Right ventricle myocardium inferior (tissue), 1 donor: ENCODE measurements at regions of chr4 and their contacts with region 1.

Region 1: DNA sequence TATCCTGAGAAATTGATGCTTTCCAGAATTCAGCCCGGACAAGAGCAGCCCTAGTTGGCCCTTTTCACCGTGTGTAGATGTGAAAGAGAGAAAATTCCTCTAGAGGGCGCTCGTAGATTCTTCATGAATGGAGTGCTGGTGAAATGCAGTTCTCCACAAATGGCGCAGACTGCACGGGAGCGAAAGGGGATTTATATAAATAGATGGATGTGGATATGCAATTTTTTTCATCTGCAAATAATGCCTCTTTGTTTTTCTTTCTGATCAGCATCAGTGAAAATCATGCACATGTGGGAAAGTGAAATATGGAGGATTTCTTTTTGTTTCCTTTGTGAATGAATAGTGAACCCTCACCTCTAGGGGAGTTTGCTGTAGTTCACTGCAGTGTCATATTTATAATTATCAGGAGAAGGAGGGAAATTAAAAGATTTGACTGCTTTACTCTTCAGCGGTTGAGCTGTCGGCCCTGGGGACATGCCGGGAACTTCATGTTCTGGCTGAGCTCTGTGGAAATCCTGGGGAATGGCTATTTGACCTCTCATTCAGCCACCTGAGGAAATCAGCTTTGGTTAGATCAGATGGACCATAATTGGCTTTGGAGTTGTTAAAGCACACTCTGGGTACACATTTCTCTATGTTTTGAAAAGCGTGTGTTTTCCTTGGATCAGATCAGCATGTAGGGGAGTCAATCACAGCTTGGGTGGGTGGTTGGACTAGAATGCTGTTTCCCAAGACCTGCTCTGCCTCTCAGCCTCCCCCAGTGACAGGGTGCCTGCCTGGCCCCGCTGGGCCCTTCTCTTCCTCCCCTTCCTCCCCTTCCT is 115.0 kb upstream of the SHISA3 start:
- DNase-seq: no peak
- ATAC-seq: peak; percentile 87

Region 2: GRCh38 chr4:41957634-41958033 is 324.7 kb before region 1 on chr4:
- intact Hi-C with region 1: loop called (anchors 5 kb)
- DNase-seq: no peak
- ATAC-seq: no peak

Region 3: DNA sequence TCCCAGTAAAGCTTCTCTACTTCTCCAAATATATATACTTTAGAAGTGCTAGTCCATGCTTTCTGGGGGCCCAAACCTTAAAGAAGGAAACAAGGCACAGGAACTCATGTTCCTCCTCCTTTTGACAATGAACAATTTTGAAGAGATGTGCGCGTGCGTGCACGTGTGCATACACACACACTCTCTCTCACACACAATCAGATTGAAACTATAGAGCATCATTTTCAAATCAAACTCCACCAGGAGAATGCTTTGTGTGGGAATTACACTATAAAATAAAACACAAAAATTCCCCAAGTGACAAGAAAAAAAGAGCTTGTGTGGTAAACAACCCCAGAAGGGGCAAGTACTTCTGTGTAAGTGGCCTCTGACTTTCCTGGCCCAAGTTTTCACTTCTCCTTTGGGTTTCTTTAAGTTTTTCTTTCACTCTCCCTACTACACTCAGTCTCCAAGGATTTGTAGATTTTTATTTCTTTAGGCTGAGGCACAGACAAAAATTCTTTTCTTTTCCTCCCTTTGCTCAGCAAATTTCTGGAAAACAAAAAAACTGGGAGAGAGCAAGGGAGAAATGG is 68.4 kb after region 1 on chr4:
- intact Hi-C with region 1: no loop called
- DNase-seq: no peak
- ATAC-seq: no peak

Region 4: GRCh38 chr4:42396752-42397634 is 114.7 kb after region 1 on chr4 and contains the start of gene SHISA3:
- intact Hi-C with region 1: loop called (anchors 10 kb)
- DNase-seq: peak; percentile 74
- ATAC-seq: peak; percentile 71
- total RNA-seq, gene SHISA3: 5.5 TPM

Region 5: DNA sequence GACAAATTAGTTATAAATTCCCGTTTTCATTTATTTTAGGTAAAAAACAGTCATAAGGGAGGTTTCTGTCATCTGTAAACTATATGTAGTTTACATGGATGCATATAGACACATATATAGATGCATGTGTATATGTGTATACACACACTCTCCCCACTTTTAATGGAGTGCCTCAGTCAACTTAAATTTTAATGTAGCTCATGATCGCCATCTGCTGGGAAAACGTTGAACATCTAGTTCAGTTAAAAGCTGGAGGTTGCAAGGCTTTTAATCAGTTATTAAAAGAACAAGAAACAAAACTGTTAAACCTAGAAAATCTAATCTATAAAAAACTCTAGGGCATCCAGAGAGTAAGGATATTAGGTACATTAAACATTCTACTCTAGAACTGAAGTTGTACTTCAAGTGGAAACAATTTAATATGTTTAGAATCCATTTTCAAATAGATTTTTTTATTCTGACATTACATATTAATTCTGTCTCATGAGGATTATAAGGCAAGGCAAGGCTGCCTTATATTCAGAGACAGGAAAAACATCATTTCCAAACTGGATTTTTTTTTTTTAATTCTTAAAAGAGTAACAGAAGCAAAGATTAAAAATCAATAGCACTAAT is 237.6 kb after region 1 on chr4:
- intact Hi-C with region 1: loop called (anchors 1 kb)
- DNase-seq: no peak
- ATAC-seq: no peak

Region 6: DNA sequence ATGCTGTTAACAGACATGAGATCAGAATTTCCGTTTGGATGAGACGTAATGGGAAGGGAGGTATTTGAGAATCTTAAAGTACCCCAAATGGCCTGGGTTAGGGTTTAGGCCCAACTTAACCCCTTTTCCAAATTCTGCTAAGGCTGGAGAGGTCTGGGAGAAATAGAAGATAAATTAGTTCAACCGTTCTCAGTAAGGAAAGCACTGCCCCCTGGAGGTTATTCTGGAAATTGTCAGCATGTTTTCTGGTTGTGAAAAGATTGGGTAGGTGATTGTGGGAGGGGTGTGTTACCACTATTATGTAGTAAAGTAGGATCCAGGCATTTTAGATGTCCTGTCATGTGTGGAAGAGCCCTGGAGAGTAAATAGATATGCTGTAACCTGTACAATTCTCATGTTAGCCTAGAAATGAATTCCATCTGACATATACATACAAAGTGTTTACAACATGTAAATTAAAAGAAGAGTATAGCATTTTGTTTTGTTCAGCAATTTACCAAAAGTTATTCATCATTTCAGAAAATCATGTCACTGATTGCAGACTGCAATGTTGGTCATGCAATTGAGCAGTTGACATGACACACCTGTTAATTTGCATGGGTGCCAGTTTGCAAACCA is 583.4 kb after region 1 on chr4:
- intact Hi-C with region 1: loop called (anchors 10 kb)
- DNase-seq: no peak
- ATAC-seq: no peak

Region 7: GRCh38 chr4:43103048-43103447 is 820.8 kb after region 1 on chr4:
- intact Hi-C with region 1: no loop called
- DNase-seq: no peak
- ATAC-seq: no peak